K562 (cell line): ENCODE measurements at regions of chr22 and their contacts with region 1.

Region 1: GRCh38 chr22:23591201-23591791 is 11.2 kb upstream of the IGLL1 start:
- DNase-seq: peak; percentile 60 to 67 (median 62)
- ATAC-seq: peak; percentile 92
- H3K4me3 ChIP-seq: no peak overlapping the region
- H3K27ac ChIP-seq: no peak overlapping the region
- H3K4me1 ChIP-seq: no peaks in the 10 kb centered on the region; a peak in 1 of 5 replicates
- H3K27me3 ChIP-seq: no peaks in the 10 kb centered on the region
- CTCF ChIP-seq: peak; percentile 81 to 86 (median 85)
- EP300 ChIP-seq: no peak
- POLR2A ChIP-seq: no peak
- RAD21 ChIP-seq: peak in 1 of 2 experiments; percentile 81; a peak in 2 of 4 replicates

Region 2: GRCh38 chr22:23163665-23164064 is 427.6 kb before region 1 on chr22:
- CTCF ChIA-PET with region 1: no interaction called
- POLR2A ChIA-PET with region 1: no interaction called
- in situ Hi-C with region 1: loop called (anchors 25 kb)
- intact Hi-C with region 1: no loop called
- DNase-seq: no peak
- ATAC-seq: no peak
- H3K4me3 ChIP-seq: no peak overlapping the region
- H3K27ac ChIP-seq: no peak overlapping the region
- H3K4me1 ChIP-seq: peaks cover 0 to 10% of the 10 kb centered on the region in 2 experiments; a peak in 3 of 5 replicates
- H3K27me3 ChIP-seq: peaks cover 76 to 89% of the 10 kb centered on the region in 2 experiments
- CTCF ChIP-seq: no peak
- EP300 ChIP-seq: no peak
- POLR2A ChIP-seq: no peak
- RAD21 ChIP-seq: no peak

Region 3: DNA sequence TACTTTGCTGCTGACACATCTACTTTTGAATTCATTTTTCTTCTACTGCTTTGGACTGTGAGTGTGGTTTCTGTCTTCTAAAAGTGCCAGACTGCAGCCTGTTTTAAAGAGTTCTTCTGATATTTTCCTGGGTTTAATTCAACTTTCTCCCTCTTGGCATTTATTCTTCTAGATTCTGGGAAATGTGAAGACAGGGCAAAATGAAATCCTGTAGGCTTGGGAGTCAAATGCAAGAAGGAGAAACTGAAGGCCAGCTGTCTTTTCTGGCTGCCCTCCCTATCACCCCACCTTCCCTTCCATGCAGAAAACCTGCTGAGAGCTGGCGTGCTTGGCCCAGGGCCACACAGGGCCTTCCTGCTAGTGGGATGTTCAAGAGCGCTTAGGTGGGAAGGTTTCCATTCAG is 152.0 kb after region 1 on chr22:
- CTCF ChIA-PET with region 1: no interaction called
- POLR2A ChIA-PET with region 1: no interaction called
- in situ Hi-C with region 1: no loop called
- intact Hi-C with region 1: no loop called
- DNase-seq: no peak
- ATAC-seq: no peak
- H3K4me3 ChIP-seq: no peak overlapping the region
- H3K27ac ChIP-seq: no peak overlapping the region
- H3K4me1 ChIP-seq: peaks cover 0 to 3% of the 10 kb centered on the region in 2 experiments; a peak in 1 of 5 replicates
- H3K27me3 ChIP-seq: no peaks in the 10 kb centered on the region
- CTCF ChIP-seq: no peak
- EP300 ChIP-seq: no peak
- POLR2A ChIP-seq: no peak
- RAD21 ChIP-seq: no peak